Heart right ventricle (tissue), 16 donors: ENCODE measurements at regions of chr9 and their contacts with region 1.

Region 1: DNA sequence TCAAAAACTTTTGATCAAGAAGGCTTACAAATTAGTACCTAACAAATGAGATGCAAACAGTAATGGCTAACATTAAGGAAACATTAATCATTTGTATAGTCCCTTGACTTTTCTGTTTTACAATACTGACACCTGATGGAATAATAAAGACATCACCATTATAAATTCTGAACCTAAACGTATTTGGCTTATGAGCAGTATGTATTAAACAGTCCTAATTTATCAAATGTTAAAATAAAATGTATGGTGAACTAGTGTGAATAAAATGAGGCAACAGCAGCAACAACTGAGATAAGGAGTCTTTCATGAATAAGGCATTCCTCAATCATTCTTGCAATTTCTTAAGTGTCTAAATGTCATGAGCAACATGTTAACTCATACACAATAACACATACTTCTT is 6.0 kb downstream of the PUM3 start:
- DNase-seq: no peak
- ATAC-seq: peak in 6 of 8 donors; percentile 48 to 75 (median 65)
- H3K4me3 ChIP-seq: peak overlapping the region in 6 of 10 donors; percentile 24 to 45 (median 35)
- H3K27ac ChIP-seq: peak overlapping the region in 7 of 10 donors; percentile 28 to 69 (median 48)
- H3K4me1 ChIP-seq: peaks cover 6 to 56% (median 51%) of the 10 kb centered on the region in 9 donors
- H3K27me3 ChIP-seq: no peaks in the 10 kb centered on the region
- CTCF ChIP-seq: peak in 8 of 9 donors; percentile 16 to 63 (median 52)

Region 2: GRCh38 chr9:2125906-2126305 is 712.0 kb before region 1 on chr9:
- intact Hi-C with region 1: loop called in 7 of 10 experiments (anchors 2 to 10 kb)
- DNase-seq: no peak
- ATAC-seq: peak in 6 of 8 donors; percentile 53 to 74 (median 66)
- H3K4me3 ChIP-seq: peak overlapping the region in 7 of 10 donors; percentile 7 to 29 (median 20)
- H3K27ac ChIP-seq: peak overlapping the region; percentile 4 to 77 (median 46)
- H3K4me1 ChIP-seq: peaks cover 14 to 83% (median 66%) of the 10 kb centered on the region in 9 donors
- H3K27me3 ChIP-seq: no peaks in the 10 kb centered on the region
- CTCF ChIP-seq: no peak

Region 3: DNA sequence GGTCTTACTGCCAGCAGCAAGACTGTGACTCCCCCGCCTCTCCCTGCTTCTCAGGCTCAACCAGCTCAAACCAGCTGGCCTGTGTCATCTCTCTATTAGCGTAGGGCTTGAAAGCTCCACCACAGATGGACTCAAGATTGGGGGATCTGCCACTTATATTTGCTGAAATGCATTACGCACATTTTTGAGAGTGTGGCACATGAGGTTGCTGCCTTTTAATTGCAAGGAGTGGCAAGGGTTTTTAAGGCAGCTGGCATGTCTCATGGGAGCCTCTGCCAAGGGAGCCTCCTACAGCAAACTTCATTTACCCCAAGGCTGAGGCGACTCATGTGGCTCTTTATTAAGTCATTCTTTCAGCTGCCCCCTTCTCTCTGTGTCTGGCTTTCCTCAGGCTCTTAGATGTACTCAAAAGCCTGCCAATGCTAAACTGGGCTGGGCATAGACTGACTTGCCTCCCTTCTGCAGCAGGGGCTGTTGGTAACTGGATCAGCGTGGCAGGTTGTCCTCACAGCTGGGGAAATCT is 603.5 kb before region 1 on chr9:
- intact Hi-C with region 1: loop called in 1 of 10 experiments (anchors 10 kb)
- DNase-seq: peak in 1 of 2 donors; percentile 12
- ATAC-seq: peak; percentile 44 to 93 (median 76)
- H3K4me3 ChIP-seq: no peak overlapping the region
- H3K27ac ChIP-seq: peak overlapping the region in 3 of 10 donors; percentile 30 to 48 (median 33)
- H3K4me1 ChIP-seq: peaks cover 0 to 26% (median 17%) of the 10 kb centered on the region in 9 donors
- H3K27me3 ChIP-seq: no peaks in the 10 kb centered on the region
- CTCF ChIP-seq: no peak

Region 4: DNA sequence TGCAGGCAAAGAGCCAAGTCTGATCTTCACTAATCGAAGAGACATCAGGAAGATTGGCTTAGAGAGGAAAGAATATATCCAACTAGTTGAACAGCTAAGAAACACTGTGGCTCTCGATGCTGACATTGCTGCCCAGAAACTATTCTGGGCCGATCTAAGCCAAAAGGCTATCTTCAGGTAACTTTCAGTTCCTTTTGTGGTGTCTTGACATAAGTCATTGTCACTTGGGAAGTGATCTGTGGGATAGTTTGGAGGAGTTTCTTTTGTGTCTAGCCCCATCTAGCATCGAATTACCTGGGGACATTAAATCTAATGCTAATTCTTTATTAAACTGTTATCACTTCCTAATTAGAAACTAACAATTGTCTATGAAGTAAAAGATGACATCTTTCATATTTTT is 192.3 kb before region 1 on chr9:
- intact Hi-C with region 1: loop called in 1 of 10 experiments (anchors 10 kb)
- DNase-seq: no peak
- ATAC-seq: no peak
- H3K4me3 ChIP-seq: no peak overlapping the region
- H3K27ac ChIP-seq: no peak overlapping the region
- H3K4me1 ChIP-seq: peaks cover 0 to 8% (median 0%) of the 10 kb centered on the region in 9 donors
- H3K27me3 ChIP-seq: no peaks in the 10 kb centered on the region
- CTCF ChIP-seq: no peak

Region 5: DNA sequence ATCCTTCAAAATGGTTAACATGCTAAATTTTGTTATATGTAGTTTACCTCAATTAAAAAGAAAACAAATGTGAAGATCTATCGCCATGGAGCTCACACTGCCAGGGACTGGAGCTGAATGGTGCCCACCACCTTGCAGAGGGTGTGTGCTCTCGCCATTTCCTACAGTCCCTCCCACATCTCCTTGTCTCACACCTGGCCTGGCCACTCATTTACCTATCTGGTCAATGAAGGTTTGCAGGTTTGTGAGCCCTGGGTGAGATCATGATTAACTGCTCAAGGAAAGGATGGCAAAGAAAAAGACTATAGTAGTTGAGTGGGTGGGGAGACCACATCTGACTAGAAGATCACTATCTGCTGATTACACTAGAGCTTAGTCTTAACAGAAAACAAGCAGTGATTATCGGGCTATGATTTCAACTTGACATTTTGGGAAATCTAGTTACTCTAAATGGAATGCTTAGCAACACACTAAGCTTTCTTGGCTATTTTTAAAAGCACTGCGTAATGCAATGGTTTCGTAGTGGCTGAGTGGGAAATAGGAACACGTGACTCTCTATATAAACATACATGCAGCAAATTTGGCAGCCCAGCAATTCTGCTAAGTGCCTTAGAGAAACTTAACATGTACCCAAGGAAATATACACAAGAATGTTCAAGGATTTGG is 21.3 kb before region 1 on chr9:
- intact Hi-C with region 1: no loop called
- DNase-seq: peak in 1 of 2 donors; percentile 41
- ATAC-seq: peak; percentile 63 to 89 (median 82)
- H3K4me3 ChIP-seq: no peak overlapping the region
- H3K27ac ChIP-seq: peak overlapping the region in 9 of 10 donors; percentile 13 to 86 (median 77)
- H3K4me1 ChIP-seq: peaks cover 2 to 31% (median 18%) of the 10 kb centered on the region in 9 donors
- H3K27me3 ChIP-seq: no peaks in the 10 kb centered on the region
- CTCF ChIP-seq: no peak

Region 6: DNA sequence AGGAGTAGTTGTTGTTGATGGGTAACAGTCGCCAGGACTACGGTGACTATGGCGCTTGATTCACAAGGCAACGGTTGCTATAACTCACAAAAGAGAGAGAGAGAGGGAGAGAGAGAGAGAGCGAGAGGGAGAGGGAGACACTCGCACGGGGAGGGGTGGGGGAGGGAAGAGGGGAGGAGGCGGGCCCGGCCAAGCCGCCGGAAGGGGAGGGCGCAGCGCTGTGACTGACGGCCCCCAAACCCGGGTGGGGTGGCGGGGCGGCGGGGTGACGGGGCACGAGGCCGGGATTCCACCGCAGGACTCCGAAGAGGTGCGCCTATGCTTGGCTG is 687.9 kb after region 1 on chr9 and contains the start of gene RFX3:
- intact Hi-C with region 1: loop called in 3 of 10 experiments (anchors 5 to 10 kb)
- DNase-seq: peak; percentile 92 to 93
- ATAC-seq: peak; percentile 94 to 99 (median 97)
- H3K4me3 ChIP-seq: peak within 1 kb of the TSS; percentile 64 to 90 (median 80)
- H3K27ac ChIP-seq: peak within 1 kb of the TSS; percentile 99 to 100 (median 100)
- H3K4me1 ChIP-seq: peaks cover 0 to 38% (median 28%) of the 10 kb centered on the region in 9 donors
- H3K27me3 ChIP-seq: no peaks in the 10 kb centered on the region
- CTCF ChIP-seq: no peak
- total RNA-seq, gene RFX3: 3.0 to 5.9 (median 3.9) TPM